Activated T-helper 1 cell treated with anti-CD3 and anti-CD28 coated beads, Interleukin-12 subunit alpha, Interleukin-12 subunit beta, Interleukin-2, Interleukin-4 antibody, amounts not matched to agents 30 ng/mL and 10 ng/mL and 1 ng/mL, durations not matched to agents 14 hours and 24 hours and 36 hours (primary cell): ENCODE measurements at regions of chr6 and their contacts with region 1.

Region 1: DNA sequence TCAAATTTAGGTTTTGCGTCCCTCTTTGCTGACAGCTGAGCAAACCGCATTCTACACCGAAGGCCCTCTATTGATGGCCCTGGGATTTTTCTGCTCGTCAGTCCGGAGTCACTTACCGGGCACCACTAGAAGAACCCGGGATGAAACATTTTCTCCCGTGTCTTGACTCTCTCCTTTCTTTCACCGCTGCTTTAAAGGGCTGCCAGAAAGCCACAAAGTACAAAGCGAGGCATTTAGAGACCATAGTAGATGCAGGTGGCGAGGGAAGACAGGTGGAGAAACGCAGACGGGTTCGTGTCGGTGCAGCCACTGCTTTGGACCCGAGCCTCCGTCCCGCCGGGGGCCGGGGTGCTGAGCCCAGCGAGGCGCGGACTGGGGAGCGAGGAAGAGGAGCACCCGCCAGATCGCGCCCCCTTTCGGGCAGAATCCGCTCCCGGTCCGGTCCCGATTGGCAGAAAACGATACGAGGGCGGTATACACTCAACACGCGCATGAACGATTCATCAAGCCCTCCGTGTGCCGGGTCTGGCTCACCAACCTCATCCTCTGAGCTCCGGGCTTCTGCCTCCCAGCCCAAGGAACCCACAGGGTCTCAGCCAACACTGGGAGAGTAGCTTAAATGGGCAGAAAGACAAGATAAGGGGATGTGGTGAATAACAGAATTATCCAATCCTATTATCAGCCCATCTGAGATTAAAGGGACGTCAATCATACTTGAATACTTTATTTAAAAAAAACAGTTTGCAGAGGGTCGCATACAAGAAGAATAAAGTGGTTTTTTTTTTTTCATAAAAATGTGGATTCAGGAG is 84.9 kb downstream of the TRIM27 start:
- DNase-seq: peak; percentile 76
- H3K4me3 Mint-ChIP-seq: peak overlapping the region; percentile 96
- H3K27ac Mint-ChIP-seq: peak overlapping the region; percentile 93
- H3K4me1 Mint-ChIP-seq: peaks cover 19% of the 10 kb centered on the region
- H3K27me3 Mint-ChIP-seq: peaks cover 47% of the 10 kb centered on the region

Region 2: DNA sequence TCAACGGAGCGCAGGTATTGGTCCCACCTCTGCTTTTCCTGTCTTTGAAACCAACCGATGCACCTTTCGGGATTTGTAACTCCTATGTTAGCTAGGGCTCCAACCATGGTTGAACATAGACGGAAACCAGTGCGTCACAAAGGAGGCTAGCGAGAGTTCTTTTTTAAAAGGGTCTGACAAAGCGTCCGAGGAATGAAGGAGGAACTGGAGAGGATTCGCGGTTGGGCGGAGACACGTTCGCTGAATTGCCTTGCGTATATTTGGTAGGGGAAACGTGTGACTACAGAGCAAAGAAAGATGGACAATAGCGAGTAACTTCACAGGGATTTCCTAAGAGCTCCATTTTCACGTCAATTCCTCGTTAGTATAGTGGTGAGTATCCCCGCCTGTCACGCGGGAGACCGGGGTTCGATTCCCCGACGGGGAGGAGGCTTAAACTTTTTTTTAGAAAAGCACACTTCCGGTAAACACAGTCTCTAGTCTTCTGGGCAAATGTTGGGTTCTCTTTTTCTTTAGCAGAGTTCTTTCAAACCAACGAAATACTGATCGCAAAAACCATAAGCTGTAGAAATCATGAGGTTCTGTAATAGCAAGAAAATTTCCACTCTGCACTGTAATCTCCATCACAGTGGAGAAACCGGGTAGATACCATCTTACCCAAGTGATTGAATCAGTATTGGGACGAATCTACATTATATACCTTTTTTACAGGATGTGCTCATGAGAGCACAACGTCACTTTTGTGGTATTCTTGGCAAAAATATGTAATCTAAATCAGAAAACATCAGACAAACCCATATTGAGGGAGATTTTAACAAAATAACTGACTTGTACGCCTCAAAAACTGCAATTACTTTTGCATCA is 1359.3 kb before region 1 on chr6:
- intact Hi-C with region 1: loop called (anchors 2 kb)
- DNase-seq: peak; percentile 81
- H3K4me3 Mint-ChIP-seq: no peak overlapping the region
- H3K27ac Mint-ChIP-seq: no peak overlapping the region
- H3K4me1 Mint-ChIP-seq: no peaks in the 10 kb centered on the region
- H3K27me3 Mint-ChIP-seq: peaks cover 10% of the 10 kb centered on the region

Region 3: DNA sequence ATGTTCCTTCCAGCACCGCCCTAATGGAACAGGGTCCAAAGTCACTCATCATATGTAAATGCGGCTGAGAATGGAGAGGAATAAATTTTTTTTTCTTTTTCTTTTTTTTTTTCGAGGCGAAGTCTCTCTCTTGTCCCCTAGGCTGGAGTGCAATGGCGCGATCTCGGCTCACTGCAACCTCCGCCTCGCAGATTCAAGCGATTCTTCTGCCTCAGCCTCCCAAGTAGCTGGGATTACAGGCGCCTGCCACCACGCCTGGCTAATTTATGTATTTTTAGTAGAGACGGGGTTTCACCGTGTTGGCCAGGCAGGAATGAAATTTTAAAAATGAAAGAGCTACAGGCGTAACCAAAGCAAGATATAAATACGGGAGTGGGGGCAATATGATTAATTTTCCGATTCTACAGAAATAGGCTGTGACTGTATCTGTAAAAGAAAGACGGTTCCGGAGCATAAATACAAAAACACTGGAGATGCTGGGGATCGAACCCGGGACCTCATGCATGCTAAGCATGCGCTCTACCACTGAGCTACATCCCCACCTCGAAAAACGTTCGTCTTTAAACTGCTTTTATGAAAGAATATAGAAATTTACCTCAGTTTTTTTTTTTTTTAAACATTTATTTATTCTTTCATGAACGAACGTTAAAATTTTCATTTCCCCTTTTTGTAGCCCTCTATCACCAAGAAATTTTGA is 180.9 kb before region 1 on chr6:
- intact Hi-C with region 1: loop called (anchors 1 kb)
- DNase-seq: no peak
- H3K4me3 Mint-ChIP-seq: peak overlapping the region; percentile 80
- H3K27ac Mint-ChIP-seq: peak overlapping the region; percentile 77
- H3K4me1 Mint-ChIP-seq: peaks cover 24% of the 10 kb centered on the region
- H3K27me3 Mint-ChIP-seq: peaks cover 66% of the 10 kb centered on the region

Region 4: DNA sequence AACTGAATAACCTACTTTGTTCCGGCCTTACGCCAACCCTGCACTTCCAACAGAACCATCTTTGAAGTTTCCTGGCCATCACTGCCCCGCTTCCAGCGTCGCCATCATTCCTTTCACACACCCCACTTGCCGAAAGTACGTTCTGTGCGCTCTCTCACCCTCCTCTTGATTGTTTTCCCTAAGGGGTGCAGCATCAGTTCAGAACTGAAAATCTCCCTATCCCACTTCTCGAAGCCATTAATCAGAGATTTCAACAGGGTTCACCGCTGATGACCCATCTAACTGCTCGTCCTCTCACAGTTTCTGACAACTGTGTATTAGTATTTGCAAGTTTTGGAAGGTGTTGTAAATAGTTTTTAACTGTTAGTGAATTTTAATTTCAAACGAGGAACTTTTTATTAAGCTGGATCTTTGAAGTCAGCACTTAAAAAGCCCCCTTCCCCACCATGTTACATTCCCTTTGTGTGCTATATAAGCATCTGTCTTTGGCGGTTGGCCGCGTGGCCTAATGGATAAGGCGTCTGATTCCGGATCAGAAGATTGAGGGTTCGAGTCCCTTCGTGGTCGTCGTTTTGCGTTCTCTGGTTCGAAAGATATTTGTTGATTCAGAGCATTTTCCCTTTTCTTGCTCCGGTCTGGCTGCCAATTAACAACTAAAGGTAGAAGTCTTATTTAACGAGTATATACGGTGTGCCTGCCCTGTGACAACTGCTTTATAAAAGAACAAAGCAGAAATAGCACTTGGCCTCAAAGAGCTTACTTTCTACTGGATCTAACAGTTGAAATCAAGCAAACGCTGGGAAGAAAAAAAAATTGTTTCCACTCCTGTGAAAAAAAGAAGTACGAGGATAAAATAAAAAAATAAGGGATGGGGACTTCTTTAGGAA is 42.3 kb after region 1 on chr6:
- intact Hi-C with region 1: loop called (anchors 1 kb)
- DNase-seq: peak; percentile 30
- H3K4me3 Mint-ChIP-seq: peak overlapping the region; percentile 76
- H3K27ac Mint-ChIP-seq: peak overlapping the region; percentile 81
- H3K4me1 Mint-ChIP-seq: peaks cover 34% of the 10 kb centered on the region
- H3K27me3 Mint-ChIP-seq: peaks cover 36% of the 10 kb centered on the region

Region 5: DNA sequence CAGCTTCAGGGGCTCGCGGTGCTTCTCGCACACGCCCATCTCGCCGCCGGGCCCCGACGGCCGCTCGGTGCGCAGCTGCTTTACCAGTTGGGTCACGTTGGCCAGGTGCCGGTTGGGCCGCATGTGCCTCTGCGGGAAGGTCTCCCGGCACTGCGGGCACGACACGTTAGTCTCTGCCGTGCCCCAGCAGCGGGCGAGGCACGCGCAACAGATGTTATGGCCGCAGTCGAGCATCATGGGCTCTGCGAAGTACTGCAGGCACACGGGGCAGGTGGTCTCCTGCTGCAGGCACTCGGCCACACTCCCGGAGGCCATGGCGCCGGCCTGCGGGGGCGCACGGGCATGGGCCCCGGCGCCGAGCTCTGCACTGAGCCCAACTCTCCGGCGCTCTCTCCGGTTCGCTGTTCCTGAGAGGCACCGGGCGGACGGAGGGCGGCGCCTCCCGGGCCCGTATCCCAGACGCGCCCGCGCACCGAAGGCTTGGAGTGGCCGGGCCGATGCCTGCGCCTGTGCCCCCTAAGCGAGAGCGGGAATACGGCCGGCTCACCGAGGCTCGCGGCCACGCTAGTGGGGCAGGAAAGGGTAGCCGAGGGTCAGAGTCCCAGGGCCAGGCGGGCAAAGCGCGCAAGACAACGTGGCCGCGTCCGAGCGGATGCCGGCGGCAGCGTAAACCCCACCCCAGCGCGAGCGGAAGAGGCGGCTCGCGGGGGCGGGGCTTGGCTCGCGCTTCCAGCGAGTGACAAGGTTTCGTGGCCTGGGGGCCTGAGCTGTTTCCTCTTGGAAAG is 84.7 kb after region 1 on chr6 and contains the start of gene TRIM27:
- intact Hi-C with region 1: loop called (anchors 1 kb)
- DNase-seq: peak; percentile 80
- H3K4me3 Mint-ChIP-seq: peak within 1 kb of the TSS; percentile 93
- H3K27ac Mint-ChIP-seq: peak within 1 kb of the TSS; percentile 91
- H3K4me1 Mint-ChIP-seq: peaks cover 33% of the 10 kb centered on the region
- H3K27me3 Mint-ChIP-seq: no peaks in the 10 kb centered on the region
- total RNA-seq, gene TRIM27: 67.2 and 67.4 TPM in 2 replicates

Region 6: DNA sequence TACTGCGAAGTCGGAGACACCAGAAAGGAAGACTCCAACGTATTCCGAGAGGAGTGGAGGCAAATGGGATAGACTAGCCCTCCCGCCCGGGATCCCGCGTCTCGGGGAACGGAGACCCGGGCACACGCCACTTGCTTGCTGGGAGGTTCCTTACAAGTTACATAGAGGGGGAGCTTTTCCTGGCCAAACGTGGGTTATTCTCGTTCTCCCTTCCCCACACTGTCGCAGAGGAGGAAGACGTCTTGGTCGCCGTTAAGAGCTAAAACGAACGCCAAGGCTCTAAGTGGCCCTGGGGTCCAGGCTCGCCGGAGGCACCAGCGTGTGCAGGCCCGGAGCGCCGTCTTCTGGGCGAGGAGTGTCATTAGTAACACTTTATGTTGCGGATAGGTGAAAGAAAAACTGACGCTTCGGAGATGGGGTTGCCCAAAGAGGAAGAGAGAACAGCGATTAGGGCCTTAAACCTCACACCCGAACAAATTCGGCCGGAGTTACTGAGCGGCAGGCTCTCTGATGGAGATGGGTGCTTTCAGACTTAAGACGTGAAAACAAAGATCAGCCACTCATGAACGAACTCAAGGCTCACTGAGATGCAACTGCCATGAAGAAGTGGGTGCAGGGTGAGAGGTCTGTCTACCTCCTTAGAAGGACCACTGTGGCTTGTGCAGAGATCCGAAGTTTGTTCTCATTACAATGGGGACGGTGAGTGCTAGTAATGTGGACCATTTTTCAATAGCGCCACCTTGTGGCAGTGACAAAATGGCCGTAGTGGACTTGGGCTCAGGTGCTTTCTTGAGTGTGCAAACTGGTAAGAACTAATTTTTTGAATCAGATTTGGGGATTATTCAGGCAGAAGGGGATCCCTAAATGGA is 178.0 kb after region 1 on chr6:
- intact Hi-C with region 1: loop called (anchors 1 kb)
- DNase-seq: peak; percentile 76
- H3K4me3 Mint-ChIP-seq: peak overlapping the region; percentile 87
- H3K27ac Mint-ChIP-seq: peak overlapping the region; percentile 89
- H3K4me1 Mint-ChIP-seq: peaks cover 22% of the 10 kb centered on the region
- H3K27me3 Mint-ChIP-seq: peaks cover 22% of the 10 kb centered on the region